Right ventricle myocardium inferior (tissue), 1 donor: ENCODE measurements at regions of chr4 and their contacts with region 1.

Region 1: GRCh38 chr4:92387459-92388069 is 83.8 kb downstream of the GRID2 start:
- DNase-seq: no peak
- ATAC-seq: no peak

Region 2: GRCh38 chr4:92305148-92305877 is 82.3 kb before region 1 on chr4:
- intact Hi-C with region 1: loop called (anchors 10 kb)
- DNase-seq: peak; percentile 66
- ATAC-seq: peak; percentile 90